CD8-positive, alpha-beta T cell (primary cell): ENCODE measurements at regions of chr2 and their contacts with region 1.

Region 1: DNA sequence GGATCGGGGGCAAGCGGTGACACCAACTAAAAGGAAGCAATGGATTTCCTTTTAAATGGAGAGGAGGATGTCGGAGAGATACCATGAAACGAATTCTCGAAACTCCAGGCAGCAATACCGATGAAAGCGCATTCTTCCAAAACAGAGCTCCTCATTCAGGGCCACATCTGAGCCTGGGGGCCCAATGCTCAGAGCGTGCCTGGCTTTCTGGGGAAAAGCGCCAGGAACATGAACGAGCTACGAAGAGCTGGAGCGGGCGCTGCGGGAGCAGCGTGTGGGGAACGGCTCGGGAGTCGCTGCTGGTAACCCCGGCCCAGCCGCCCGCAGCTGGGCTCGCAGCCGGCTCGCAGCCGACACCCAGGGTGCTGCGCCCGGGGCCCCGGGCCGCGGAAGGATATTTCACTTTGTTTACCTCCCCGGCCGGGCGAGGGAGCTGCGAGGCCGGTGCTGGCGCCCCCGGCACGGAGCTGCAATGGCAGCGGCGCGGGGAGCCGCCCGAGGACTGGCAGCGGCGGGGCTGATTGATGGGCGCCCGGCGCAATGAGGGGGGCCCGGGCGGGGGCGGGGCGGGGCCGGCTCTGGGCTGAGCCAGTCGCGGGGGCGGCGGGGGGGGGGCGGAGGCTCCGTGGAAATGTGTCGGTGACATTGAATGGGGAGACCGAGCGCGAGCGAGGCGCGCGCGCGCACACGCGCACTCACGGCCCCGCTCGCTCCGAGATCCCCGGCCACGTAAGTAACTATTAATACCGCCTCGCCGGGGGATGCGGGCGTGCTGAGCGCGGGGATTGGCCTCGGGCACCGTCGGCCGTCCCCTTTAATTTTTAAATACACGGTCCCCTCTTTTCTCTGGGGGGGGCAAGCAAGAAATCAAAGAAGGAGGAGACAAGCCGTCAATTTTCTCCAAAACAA is at the start of gene TRIB2:
- DNase-seq: peak; percentile 86 to 96 (median 91)
- ATAC-seq: peak; percentile 79
- H3K4me3 ChIP-seq: peak within 1 kb of the TSS; percentile 82 to 96
- H3K4me3 Mint-ChIP-seq: peak within 1 kb of the TSS; percentile 97
- H3K27ac ChIP-seq: peak within 1 kb of the TSS; percentile 72 to 81
- H3K27ac Mint-ChIP-seq: peak within 1 kb of the TSS; percentile 93
- H3K4me1 ChIP-seq: peaks cover 35% of the 10 kb centered on the region
- H3K4me1 Mint-ChIP-seq: peaks cover 46% of the 10 kb centered on the region
- H3K27me3 ChIP-seq: no peaks in the 10 kb centered on the region
- H3K27me3 Mint-ChIP-seq: no peaks in the 10 kb centered on the region
- CTCF ChIP-seq: peak; percentile 38
- total RNA-seq, gene TRIB2: 46.6 to 54.4 TPM

Region 2: DNA sequence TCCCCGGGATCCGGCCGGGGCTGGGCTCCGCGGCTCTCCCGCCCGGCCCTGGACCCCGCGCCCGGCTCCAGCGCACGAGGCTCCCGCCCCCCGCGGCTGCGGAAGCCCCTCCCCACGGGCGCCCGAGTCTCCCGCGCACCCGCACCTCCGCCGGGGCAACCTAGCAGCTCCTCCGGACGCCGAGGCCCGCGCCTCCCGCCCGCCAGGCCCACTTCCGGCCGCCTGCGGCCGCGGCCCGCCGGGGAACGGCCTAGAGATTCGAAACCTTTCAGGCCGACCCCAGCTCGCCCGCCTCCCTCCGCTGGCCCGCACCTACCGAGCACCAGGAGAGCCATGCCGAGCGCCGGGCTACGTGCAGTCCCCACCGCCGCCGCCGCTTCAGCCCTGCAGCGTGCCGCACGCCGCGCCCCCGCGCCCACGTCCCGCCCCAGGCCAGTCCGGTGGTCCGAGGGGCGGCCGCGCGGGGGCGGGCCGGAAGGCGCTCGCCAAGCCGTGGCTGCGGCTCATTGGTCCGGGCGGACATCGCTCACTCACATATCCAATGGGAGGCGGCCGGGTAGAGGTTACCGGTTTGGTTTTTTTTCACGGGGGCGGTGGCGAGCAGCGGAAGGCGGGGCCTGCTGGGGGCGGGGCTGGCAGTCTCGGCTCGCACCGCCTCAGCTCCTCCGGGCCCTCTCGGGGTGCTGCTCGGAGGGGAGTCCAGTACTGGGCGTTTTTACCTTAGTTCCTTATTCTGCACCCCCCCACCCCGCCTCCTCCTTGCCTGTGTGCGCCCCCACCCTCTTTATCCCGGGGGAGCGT is 1904.0 kb before region 1 on chr2 and contains the start of gene PDIA6:
- CTCF ChIA-PET with region 1: no interaction called
- POLR2A ChIA-PET with region 1: no interaction called
- intact Hi-C with region 1: loop called in 1 of 2 experiments (anchors 5 kb)
- DNase-seq: peak; percentile 89 to 96 (median 93)
- ATAC-seq: peak; percentile 90
- H3K4me3 ChIP-seq: peak within 1 kb of the TSS; percentile 65 to 84
- H3K4me3 Mint-ChIP-seq: peak within 1 kb of the TSS; percentile 91
- H3K27ac ChIP-seq: peak within 1 kb of the TSS; percentile 56 to 73
- H3K27ac Mint-ChIP-seq: peak within 1 kb of the TSS; percentile 86
- H3K4me1 ChIP-seq: peaks cover 27% of the 10 kb centered on the region
- H3K4me1 Mint-ChIP-seq: peaks cover 41% of the 10 kb centered on the region
- H3K27me3 ChIP-seq: no peaks in the 10 kb centered on the region
- H3K27me3 Mint-ChIP-seq: peaks cover 1% of the 10 kb centered on the region
- CTCF ChIP-seq: no peak
- total RNA-seq, gene PDIA6: 24.4 to 24.8 TPM

Region 3: DNA sequence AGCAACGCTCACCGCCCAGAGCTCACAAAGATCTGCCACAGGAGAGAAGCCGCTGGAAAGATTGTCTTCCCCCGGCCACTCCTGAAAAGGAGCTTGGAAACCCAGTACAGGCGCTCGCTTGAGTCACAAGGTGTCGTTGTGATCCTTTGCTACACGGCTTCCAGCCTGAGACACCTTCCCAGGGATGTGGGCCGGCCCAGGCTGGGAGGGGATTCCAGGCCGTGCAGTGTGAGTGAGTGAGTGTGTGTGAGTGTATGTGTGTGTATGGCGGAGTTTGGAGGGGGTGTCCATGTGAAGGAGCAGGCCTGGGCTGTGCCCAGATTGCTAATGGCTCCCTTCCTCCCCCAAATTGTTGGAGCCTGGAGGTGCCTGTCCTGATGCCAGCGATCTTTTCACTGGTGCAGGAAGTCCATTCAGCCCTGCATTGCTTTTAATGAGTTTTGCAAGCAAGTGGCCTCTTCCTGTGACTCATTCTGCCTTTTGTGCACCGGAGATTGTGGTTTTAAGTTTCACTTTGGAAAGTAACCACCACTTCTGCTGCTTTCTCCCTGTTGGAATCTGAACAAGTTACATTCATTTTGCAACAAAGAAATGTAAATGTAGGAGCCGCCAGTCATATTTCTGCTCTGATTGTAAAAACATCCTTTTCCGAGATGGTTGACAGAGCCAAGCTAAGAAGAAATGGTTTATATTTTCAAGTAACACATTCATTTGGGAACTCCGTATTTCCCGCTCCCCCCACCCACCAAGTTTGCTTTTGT is 886.4 kb before region 1 on chr2:
- CTCF ChIA-PET with region 1: interaction called, 22 read pairs
- POLR2A ChIA-PET with region 1: interaction called, 9 read pairs
- intact Hi-C with region 1: loop called (anchors 1 to 5 kb)
- DNase-seq: peak in 8 of 9 experiments; percentile 21 to 77 (median 51)
- ATAC-seq: peak; percentile 78
- H3K4me3 ChIP-seq: peak overlapping the region; percentile 27 to 40
- H3K4me3 Mint-ChIP-seq: peak overlapping the region; percentile 78
- H3K27ac ChIP-seq: no peak overlapping the region
- H3K27ac Mint-ChIP-seq: peak overlapping the region; percentile 42
- H3K4me1 ChIP-seq: peaks cover 28% of the 10 kb centered on the region
- H3K4me1 Mint-ChIP-seq: peaks cover 45% of the 10 kb centered on the region
- H3K27me3 ChIP-seq: no peaks in the 10 kb centered on the region
- H3K27me3 Mint-ChIP-seq: no peaks in the 10 kb centered on the region
- CTCF ChIP-seq: no peak

Region 4: GRCh38 chr2:12044857-12045256 is 671.7 kb before region 1 on chr2:
- CTCF ChIA-PET with region 1: interaction called, 5 read pairs
- POLR2A ChIA-PET with region 1: interaction called, 5 read pairs
- intact Hi-C with region 1: loop called in 1 of 2 experiments (anchors 10 kb)
- DNase-seq: peak in 7 of 9 experiments; percentile 33 to 81 (median 51)
- ATAC-seq: peak; percentile 92
- H3K4me3 ChIP-seq: peak overlapping the region in 1 of 2 experiments; percentile 1
- H3K4me3 Mint-ChIP-seq: peak overlapping the region; percentile 49
- H3K27ac ChIP-seq: no peak overlapping the region
- H3K27ac Mint-ChIP-seq: peak overlapping the region; percentile 75
- H3K4me1 ChIP-seq: peaks cover 50% of the 10 kb centered on the region
- H3K4me1 Mint-ChIP-seq: peaks cover 67% of the 10 kb centered on the region
- H3K27me3 ChIP-seq: no peaks in the 10 kb centered on the region
- H3K27me3 Mint-ChIP-seq: no peaks in the 10 kb centered on the region
- CTCF ChIP-seq: no peak

Region 5: DNA sequence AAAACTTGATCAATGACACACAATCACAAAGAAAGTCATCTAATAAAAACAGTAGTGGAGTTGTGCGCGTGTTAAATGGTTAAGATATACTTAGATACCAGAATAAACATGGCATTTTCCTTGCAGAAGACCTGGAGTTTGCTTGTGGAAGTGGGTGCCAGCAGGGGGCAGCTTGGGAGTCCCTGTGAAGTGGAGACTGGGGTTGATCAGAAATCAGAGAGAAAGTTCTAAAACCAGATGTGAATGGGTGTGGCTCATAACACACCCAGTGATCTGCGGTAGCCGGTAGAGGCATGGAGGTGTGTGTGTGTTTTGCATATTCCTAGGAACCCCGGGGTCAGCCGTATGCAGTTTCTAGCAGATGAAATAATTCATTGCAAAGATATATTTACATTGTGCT is 299.9 kb before region 1 on chr2:
- CTCF ChIA-PET with region 1: interaction called, 28 read pairs
- POLR2A ChIA-PET with region 1: interaction called, 12 read pairs
- intact Hi-C with region 1: loop called (anchors 1 to 2 kb)
- DNase-seq: peak; percentile 34 to 78 (median 58)
- ATAC-seq: peak; percentile 62
- H3K4me3 ChIP-seq: no peak overlapping the region
- H3K4me3 Mint-ChIP-seq: no peak overlapping the region
- H3K27ac ChIP-seq: no peak overlapping the region
- H3K27ac Mint-ChIP-seq: peak overlapping the region; percentile 5
- H3K4me1 ChIP-seq: peaks cover 20% of the 10 kb centered on the region
- H3K4me1 Mint-ChIP-seq: peaks cover 34% of the 10 kb centered on the region
- H3K27me3 ChIP-seq: no peaks in the 10 kb centered on the region
- H3K27me3 Mint-ChIP-seq: no peaks in the 10 kb centered on the region
- CTCF ChIP-seq: peak; percentile 43

Region 6: DNA sequence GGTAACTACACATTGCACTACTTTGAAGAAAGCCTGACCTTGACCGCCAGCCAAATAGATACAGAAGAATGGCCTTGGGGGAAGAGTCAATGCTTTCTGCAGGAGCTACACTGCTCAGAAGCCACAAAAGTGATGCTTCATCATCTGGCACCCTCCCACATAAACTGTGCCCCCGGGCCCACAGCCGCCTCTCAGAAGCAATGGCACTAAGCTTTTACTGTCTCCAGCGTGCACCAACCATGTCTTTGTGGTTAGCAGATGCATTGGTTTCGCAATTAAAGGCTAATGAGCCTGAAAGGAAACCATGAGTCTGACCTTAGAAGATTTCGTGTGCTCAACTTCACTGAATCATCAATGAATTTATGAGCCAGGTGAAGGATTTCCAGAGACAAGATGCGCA is 209.2 kb before region 1 on chr2:
- CTCF ChIA-PET with region 1: interaction called, 10 read pairs
- POLR2A ChIA-PET with region 1: interaction called, 12 read pairs
- intact Hi-C with region 1: loop called in 1 of 2 experiments (anchors 5 kb)
- DNase-seq: peak in 7 of 9 experiments; percentile 40 to 74 (median 63)
- ATAC-seq: peak; percentile 92
- H3K4me3 ChIP-seq: peak overlapping the region in 1 of 2 experiments; percentile 1
- H3K4me3 Mint-ChIP-seq: peak overlapping the region; percentile 50
- H3K27ac ChIP-seq: peak overlapping the region in 1 of 2 experiments; percentile 61
- H3K27ac Mint-ChIP-seq: no peak overlapping the region
- H3K4me1 ChIP-seq: peaks cover 56% of the 10 kb centered on the region
- H3K4me1 Mint-ChIP-seq: peaks cover 92% of the 10 kb centered on the region
- H3K27me3 ChIP-seq: no peaks in the 10 kb centered on the region
- H3K27me3 Mint-ChIP-seq: no peaks in the 10 kb centered on the region
- CTCF ChIP-seq: no peak

Region 7: DNA sequence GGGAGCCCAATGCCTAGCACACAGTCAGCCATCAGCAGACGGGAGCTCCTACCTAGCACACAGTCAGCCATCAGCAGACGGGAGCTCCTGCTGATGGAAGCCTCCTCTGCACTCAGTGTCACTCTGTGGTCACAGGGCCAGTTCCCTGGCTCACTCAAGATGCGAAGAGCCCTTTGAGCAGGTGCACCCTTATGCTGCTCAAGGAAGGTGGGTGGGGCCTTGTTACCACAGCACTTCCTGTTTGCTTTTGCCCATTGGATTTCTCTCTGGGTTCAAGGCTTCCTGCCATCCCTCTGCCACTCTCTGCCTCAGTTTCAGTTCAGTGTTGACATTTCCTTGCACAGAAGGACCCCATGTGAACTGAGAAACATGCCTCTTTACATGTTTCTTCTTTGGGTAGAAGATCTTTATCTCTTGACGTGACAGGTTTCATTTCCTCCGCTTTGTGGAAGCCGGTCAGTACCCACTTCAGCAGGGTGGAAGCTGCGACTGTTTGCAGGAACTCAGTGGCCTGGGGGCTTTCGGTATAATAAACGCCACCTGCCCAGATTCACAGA is 11.8 kb after region 1 on chr2:
- CTCF ChIA-PET with region 1: interaction called, 32 read pairs
- POLR2A ChIA-PET with region 1: interaction called, 65 read pairs
- intact Hi-C with region 1: loop called (anchors 1 kb)
- DNase-seq: peak; percentile 15 to 84 (median 64)
- ATAC-seq: peak; percentile 83
- H3K4me3 ChIP-seq: peak overlapping the region; percentile 6 to 28
- H3K4me3 Mint-ChIP-seq: peak overlapping the region; percentile 59
- H3K27ac ChIP-seq: peak overlapping the region; percentile 18 to 65
- H3K27ac Mint-ChIP-seq: peak overlapping the region; percentile 77
- H3K4me1 ChIP-seq: peaks cover 46% of the 10 kb centered on the region
- H3K4me1 Mint-ChIP-seq: peaks cover 87% of the 10 kb centered on the region
- H3K27me3 ChIP-seq: no peaks in the 10 kb centered on the region
- H3K27me3 Mint-ChIP-seq: no peaks in the 10 kb centered on the region
- CTCF ChIP-seq: no peak